Posterior vena cava (tissue), 2 donors: ENCODE measurements at regions of chr22 and their contacts with region 1.

Region 1: GRCh38 chr22:29994027-29994715 is 86.1 kb upstream of the HORMAD2 start:
- DNase-seq: no peak

Region 2: GRCh38 chr22:28999919-29000556 is 994.1 kb before region 1 on chr22:
- intact Hi-C with region 1: loop called in 1 of 2 experiments (anchors 5 kb)
- DNase-seq: no peak